ENCODE measurements at regions of chr13 and their contacts with region 1.

Region 1: GRCh38 chr13:38914070-38914469 is 76.6 kb downstream of the STOML3 start:
- DNase-seq: no peak

Region 2: DNA sequence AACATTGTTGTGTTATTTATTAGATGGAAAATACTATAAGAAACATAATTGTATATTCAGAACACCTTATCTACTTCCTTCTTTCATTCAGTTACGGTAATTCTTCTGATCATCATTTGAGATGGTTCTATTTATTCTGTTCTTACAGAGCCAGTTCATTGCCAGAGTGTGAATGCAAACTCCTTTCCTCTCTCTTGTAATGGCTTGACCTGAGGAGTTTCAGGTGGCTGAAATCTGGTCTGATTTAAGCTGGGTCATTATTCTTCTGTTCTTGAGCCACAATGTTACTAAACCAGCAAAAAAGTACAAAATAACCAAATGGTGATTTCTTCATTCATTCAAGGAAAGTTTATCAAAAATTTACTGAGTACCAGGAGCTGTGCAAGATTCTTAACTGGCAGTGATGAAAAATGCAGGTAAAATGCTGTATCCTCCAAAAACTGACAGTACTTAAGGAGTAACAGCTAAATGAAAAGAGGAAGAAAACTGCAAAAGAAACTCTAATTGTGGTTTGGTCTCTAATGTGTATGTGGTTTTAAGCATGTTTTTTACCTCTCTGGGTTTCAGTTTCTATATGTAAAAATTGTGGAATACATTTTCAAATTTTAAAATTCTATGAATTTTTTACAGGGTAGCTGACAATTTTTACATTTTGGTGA is 746.8 kb before region 1 on chr13:
- intact Hi-C with region 1: no loop called
- DNase-seq: no peak

Region 3: GRCh38 chr13:38854226-38854625 is 59.8 kb before region 1 on chr13:
- intact Hi-C with region 1: no loop called
- DNase-seq: no peak

Region 4: DNA sequence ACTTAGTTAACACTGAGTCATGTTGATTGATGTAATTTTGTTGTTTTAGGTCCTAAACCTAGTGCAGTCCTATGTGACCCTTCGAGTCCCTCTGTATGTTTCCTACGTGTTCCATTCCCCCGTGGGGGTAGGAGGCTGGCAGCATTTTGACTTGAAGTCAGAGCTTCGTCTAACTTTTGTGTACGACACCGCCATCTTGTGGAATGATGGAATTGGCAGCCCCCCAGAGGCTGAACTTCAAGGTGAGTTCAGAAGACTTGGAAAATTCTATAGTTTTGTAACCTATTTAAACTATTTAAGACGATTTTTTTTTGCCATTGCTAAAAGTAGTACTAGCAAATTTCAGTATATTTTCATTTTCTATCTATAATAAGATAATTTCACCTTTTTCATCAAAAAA is 41.4 kb before region 1 on chr13:
- intact Hi-C with region 1: loop called (anchors 5 kb)
- DNase-seq: peak in 8 of 10 donors; percentile 16 to 92 (median 53)